PC-9 (cell line): ENCODE measurements at regions of chrX and their contacts with region 1.

Region 1: GRCh38 chrX:101407748-101408531 is at the starts of genes GLA and HNRNPH2:
- DNase-seq: peak; percentile 87 to 99
- H3K4me3 ChIP-seq: peak within 1 kb of the TSS; percentile 93
- H3K27ac ChIP-seq: peak within 1 kb of the TSS; percentile 91
- H3K4me1 ChIP-seq: peaks cover 20% of the 10 kb centered on the region
- H3K27me3 ChIP-seq: no peaks in the 10 kb centered on the region
- CTCF ChIP-seq: no peak
- total RNA-seq, gene GLA: 72.2 and 80.5 TPM in 2 replicates
- total RNA-seq, gene HNRNPH2: 61.0 and 72.9 TPM in 2 replicates

Region 2: GRCh38 chrX:100649550-100650356 is 758.2 kb before region 1 on chrX:
- CTCF ChIA-PET with region 1: no interaction called
- POLR2A ChIA-PET with region 1: no interaction called
- intact Hi-C with region 1: loop called (anchors 5 kb)
- DNase-seq: peak; percentile 73 to 87
- H3K4me3 ChIP-seq: peak overlapping the region; percentile 97; the same call in 1 of the 2 replicates
- H3K27ac ChIP-seq: peak overlapping the region; percentile 94
- H3K4me1 ChIP-seq: peaks cover 60% of the 10 kb centered on the region
- H3K27me3 ChIP-seq: no peaks in the 10 kb centered on the region
- CTCF ChIP-seq: no peak

Region 3: GRCh38 chrX:101617211-101618191 is 209.6 kb after region 1 on chrX and contains the start of gene ARMCX6:
- CTCF ChIA-PET with region 1: no interaction called
- POLR2A ChIA-PET with region 1: no interaction called
- intact Hi-C with region 1: loop called (anchors 5 kb)
- DNase-seq: peak; percentile 41 to 47
- H3K4me3 ChIP-seq: peak within 1 kb of the TSS; percentile 71
- H3K27ac ChIP-seq: no peak within 1 kb of the TSS
- H3K4me1 ChIP-seq: peaks cover 1% of the 10 kb centered on the region; the same call in 1 of the 2 replicates
- H3K27me3 ChIP-seq: no peaks in the 10 kb centered on the region
- CTCF ChIP-seq: peak; percentile 52
- total RNA-seq, gene ARMCX6: 48.2 and 65.5 TPM in 2 replicates

Region 4: GRCh38 chrX:102604327-102604726 is 1196.4 kb after region 1 on chrX:
- CTCF ChIA-PET with region 1: no interaction called
- POLR2A ChIA-PET with region 1: no interaction called
- intact Hi-C with region 1: no loop called
- DNase-seq: no peak
- H3K4me3 ChIP-seq: no peak overlapping the region
- H3K27ac ChIP-seq: no peak overlapping the region
- H3K4me1 ChIP-seq: no peaks in the 10 kb centered on the region
- H3K27me3 ChIP-seq: no peaks in the 10 kb centered on the region
- CTCF ChIP-seq: no peak